Activated T-helper 2 cell treated with anti-CD3 and anti-CD28 coated beads, Interferon-gamma antibody, Interleukin-2, Interleukin-4, amounts not matched to agents 10 μg/mL and 5 μg/mL and 100 μg/mL, durations not matched to agents 14 hours and 24 hours and 36 hours (primary cell): ENCODE measurements at regions of chr15 and their contacts with region 1.

Region 1: GRCh38 chr15:48877630-48878595 is at the start of gene EID1:
- DNase-seq: peak; percentile 95
- H3K4me3 Mint-ChIP-seq: peak within 1 kb of the TSS; percentile 95
- H3K27ac Mint-ChIP-seq: peak within 1 kb of the TSS; percentile 95
- H3K4me1 Mint-ChIP-seq: peaks cover 56% of the 10 kb centered on the region
- H3K27me3 Mint-ChIP-seq: no peaks in the 10 kb centered on the region
- total RNA-seq, gene EID1: 168 and 202 TPM in 2 replicates

Region 2: DNA sequence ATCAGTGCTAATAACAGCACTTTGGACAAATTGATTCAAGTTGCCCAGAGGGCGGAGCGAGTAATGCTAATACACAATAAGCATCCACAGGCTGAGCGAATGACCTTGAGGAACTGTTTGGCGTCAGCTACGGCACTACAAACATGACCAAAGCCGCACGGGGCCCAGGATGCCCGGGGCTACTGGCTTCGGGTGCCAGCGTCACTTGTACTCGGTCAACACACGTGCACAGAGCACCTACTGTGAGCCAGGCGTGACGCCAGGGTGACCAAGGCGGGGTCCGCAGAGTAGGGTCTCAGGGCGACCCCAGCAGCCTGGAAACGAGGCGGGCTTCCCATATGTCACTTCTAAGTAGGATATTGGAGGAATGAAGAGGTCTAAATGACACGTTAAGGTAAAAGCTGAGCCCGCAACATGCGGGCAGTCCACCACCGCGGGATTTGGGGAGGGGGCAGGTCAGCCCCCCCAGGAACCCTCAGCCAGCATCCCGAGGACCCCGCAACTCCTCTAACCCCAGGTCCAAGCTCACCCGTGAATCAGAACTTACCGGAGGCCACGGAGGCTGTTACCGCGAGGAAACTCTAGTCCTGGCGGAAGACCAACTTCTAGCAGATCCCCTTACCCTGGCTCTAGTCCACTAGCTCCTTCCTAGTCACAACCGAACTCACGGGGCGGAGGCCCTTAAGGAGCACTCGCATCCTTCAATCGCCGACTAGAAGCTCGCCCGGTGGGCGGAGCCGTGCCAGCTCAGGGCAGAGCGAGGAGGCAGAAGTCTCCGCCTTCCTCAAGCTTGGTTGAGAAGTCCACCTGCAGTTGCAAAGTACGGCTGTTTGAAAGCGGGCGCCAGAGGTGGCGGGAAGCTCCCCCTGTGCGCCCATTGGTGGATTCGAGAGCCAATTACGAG is 67.2 kb before region 1 on chr15 and contains the start of gene CEP152:
- intact Hi-C with region 1: loop called (anchors 5 kb)
- DNase-seq: peak; percentile 99
- H3K4me3 Mint-ChIP-seq: peak within 1 kb of the TSS; percentile 97
- H3K27ac Mint-ChIP-seq: peak within 1 kb of the TSS; percentile 97
- H3K4me1 Mint-ChIP-seq: peaks cover 31% of the 10 kb centered on the region
- H3K27me3 Mint-ChIP-seq: peaks cover 11% of the 10 kb centered on the region
- total RNA-seq, gene CEP152: 26.2 and 29.2 TPM in 2 replicates

Region 3: DNA sequence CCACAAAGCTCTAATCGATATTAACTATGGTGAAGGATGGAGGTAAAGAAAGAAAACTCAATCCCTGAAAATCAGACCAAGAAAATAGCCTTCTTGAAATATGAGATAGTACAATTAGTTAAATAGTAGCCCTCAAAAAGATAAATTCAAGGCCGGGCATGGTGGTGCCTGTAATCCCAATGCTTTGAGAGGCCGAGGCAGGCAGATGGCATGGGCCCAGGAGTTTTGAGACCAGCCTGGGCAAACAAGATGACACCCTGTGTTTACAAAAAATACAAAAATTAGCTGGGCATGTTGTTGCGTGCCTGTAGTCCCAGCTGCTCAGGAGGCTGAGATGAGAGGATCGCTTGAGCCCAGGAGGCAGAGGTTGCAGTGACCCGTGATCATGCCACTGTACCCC is 35.4 kb before region 1 on chr15:
- intact Hi-C with region 1: no loop called
- DNase-seq: no peak
- H3K4me3 Mint-ChIP-seq: no peak overlapping the region
- H3K27ac Mint-ChIP-seq: no peak overlapping the region
- H3K4me1 Mint-ChIP-seq: no peaks in the 10 kb centered on the region
- H3K27me3 Mint-ChIP-seq: peaks cover 2% of the 10 kb centered on the region

Region 4: DNA sequence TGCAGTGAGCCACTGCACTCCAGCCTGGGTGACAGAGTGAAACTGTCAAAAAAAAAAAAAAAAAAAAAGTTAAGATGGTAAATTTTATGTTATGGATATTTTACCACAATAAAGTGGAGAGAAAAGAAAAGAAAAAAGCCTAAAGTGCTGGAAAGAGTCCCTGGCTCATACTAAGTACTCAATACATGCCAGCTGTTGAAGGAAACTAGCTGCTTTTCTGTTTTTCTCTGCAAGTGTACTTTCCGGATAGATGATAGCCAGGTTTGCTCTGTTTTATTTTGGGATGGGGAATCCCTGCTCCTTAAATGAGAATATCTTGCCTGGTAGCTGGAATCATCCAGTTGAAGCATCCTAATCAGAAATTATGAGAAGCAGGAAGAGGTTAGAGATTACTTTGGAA is 10.9 kb after region 1 on chr15:
- intact Hi-C with region 1: loop called (anchors 1 kb)
- DNase-seq: no peak
- H3K4me3 Mint-ChIP-seq: no peak overlapping the region
- H3K27ac Mint-ChIP-seq: peak overlapping the region; percentile 30
- H3K4me1 Mint-ChIP-seq: peaks cover 40% of the 10 kb centered on the region
- H3K27me3 Mint-ChIP-seq: no peaks in the 10 kb centered on the region

Region 5: GRCh38 chr15:48946088-48946839 is 68.4 kb after region 1 on chr15:
- intact Hi-C with region 1: loop called (anchors 1 kb)
- DNase-seq: no peak
- H3K4me3 Mint-ChIP-seq: no peak overlapping the region
- H3K27ac Mint-ChIP-seq: peak overlapping the region; percentile 86
- H3K4me1 Mint-ChIP-seq: peaks cover 34% of the 10 kb centered on the region
- H3K27me3 Mint-ChIP-seq: no peaks in the 10 kb centered on the region

Region 6: DNA sequence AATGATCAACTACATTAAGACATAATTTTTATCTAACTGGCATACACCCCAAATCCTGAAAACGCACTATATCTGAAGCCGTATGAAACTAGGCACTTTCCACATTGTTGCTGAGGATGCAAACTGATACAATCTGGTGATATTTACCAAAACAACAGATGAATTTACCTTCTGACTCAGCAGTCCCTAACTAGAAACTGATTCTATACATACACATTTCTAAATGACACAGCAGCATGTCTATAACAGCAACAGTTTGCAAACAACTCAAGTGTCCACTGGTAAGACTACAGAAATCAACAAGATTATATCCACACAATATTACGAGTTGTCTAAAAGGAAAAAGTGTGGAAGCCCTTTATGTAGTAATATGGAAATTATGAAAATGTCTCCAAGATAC is 145.4 kb after region 1 on chr15:
- intact Hi-C with region 1: loop called (anchors 5 kb)
- DNase-seq: no peak
- H3K4me3 Mint-ChIP-seq: no peak overlapping the region
- H3K27ac Mint-ChIP-seq: peak overlapping the region; percentile 47
- H3K4me1 Mint-ChIP-seq: peaks cover 19% of the 10 kb centered on the region
- H3K27me3 Mint-ChIP-seq: no peaks in the 10 kb centered on the region

Region 7: GRCh38 chr15:49075885-49076284 is 198.0 kb after region 1 on chr15:
- intact Hi-C with region 1: no loop called
- DNase-seq: no peak
- H3K4me3 Mint-ChIP-seq: no peak overlapping the region
- H3K27ac Mint-ChIP-seq: no peak overlapping the region
- H3K4me1 Mint-ChIP-seq: peaks cover 1% of the 10 kb centered on the region
- H3K27me3 Mint-ChIP-seq: peaks cover 22% of the 10 kb centered on the region

Region 8: GRCh38 chr15:49155110-49155833 is 277.4 kb after region 1 on chr15 and contains the start of gene COPS2:
- intact Hi-C with region 1: loop called (anchors 5 kb)
- DNase-seq: peak; percentile 94
- H3K4me3 Mint-ChIP-seq: peak within 1 kb of the TSS; percentile 100
- H3K27ac Mint-ChIP-seq: peak within 1 kb of the TSS; percentile 99
- H3K4me1 Mint-ChIP-seq: peaks cover 44% of the 10 kb centered on the region
- H3K27me3 Mint-ChIP-seq: no peaks in the 10 kb centered on the region
- total RNA-seq, gene COPS2: 85.1 and 94.7 TPM in 2 replicates